ENCODE measurements at regions of chr3 and their contacts with region 1.

Region 1: DNA sequence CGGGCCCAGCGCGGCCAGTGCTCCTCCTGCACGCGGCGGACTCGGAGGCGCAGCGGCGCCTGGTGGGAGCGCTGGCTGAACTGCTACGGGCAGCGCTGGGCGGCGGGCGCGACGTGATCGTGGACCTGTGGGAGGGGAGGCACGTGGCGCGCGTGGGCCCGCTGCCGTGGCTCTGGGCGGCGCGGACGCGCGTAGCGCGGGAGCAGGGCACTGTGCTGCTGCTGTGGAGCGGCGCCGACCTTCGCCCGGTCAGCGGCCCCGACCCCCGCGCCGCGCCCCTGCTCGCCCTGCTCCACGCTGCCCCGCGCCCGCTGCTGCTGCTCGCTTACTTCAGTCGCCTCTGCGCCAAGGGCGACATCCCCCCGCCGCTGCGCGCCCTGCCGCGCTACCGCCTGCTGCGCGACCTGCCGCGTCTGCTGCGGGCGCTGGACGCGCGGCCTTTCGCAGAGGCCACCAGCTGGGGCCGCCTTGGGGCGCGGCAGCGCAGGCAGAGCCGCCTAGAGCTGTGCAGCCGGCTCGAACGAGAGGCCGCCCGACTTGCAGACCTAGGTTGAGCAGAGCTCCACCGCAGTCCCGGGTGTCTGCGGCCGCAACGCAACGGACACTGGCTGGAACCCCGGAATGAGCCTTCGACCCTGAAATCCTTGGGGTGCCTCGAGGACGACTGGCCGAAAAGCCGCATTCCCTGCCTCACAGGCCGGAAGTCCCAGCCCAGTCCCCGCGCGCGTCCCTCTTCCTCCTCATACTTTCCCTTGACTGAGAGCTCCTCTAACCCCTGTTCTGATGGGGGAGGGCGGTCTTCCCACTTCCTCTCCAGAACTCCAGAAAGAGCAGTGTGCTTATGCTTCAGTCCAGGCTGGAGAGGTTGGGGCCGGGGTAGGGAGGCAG is 1.4 kb upstream of the IL17RC start:
- DNase-seq: peak; percentile 91
- H3K4me3 ChIP-seq: peak overlapping the region; percentile 47 to 83 (median 68)
- H3K27ac ChIP-seq: peak overlapping the region; percentile 83 to 98 (median 96)
- H3K4me1 ChIP-seq: peaks cover 0 to 56% (median 47%) of the 10 kb centered on the region in 4 donors
- H3K27me3 ChIP-seq: no peaks in the 10 kb centered on the region
- CTCF ChIP-seq: peak in 3 of 4 experiments; percentile 47 to 61 (median 52)
- EP300 ChIP-seq: no peak
- POLR2A ChIP-seq: peak; percentile 18 to 41

Region 2: DNA sequence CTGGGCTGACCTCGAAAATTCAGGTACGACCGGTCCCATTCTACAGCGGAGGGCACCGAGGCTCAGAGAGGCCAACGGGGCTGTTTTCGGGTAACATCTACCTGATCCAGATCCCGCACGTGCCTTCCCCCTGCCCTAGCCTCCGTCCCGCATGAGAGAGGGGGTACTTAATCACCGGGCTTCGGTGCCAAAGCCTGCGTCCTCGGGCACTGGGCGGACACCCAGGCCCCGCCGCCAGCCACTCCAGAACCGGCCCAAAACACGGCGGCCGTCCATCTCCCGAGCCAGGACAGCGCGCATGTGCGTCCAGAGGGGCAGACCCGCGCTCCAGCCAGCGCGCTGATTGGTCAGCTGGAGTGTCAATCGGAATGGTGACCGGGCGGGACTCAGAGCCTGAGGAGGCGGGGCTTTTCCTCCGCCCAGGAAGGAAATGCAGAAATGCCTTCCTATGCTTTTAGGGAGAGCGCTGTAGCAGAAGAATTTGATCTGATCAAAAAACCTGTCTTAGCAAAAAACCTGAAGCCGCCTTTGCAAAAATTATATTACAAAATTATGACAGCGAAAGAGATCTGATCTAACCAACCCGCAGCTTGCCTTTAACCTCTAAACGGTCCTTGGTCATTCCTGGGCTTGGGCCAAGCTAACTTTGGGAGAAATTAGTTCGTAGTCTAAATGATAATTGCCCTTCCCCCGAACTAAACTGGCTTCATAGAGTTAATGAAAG is 71.6 kb before region 1 on chr3 and contains the start of gene RPUSD3:
- intact Hi-C with region 1: loop called (anchors 2 kb)
- DNase-seq: peak; percentile 99
- H3K4me3 ChIP-seq: peak within 1 kb of the TSS; percentile 56 to 84 (median 78)
- H3K27ac ChIP-seq: peak within 1 kb of the TSS; percentile 80 to 93 (median 89)
- H3K4me1 ChIP-seq: peaks cover 0 to 19% (median 12%) of the 10 kb centered on the region in 4 donors
- H3K27me3 ChIP-seq: no peaks in the 10 kb centered on the region
- CTCF ChIP-seq: no peak
- EP300 ChIP-seq: no peak
- POLR2A ChIP-seq: peak in 1 of 2 donors; percentile 50
- total RNA-seq, gene RPUSD3: 42.6 to 54.7 (median 47.6) TPM

Region 3: GRCh38 chr3:9862391-9863057 is 53.0 kb before region 1 on chr3:
- intact Hi-C with region 1: loop called (anchors 2 kb)
- DNase-seq: peak; percentile 89
- H3K4me3 ChIP-seq: peak overlapping the region; percentile 10 to 39 (median 23)
- H3K27ac ChIP-seq: peak overlapping the region; percentile 82 to 93 (median 90)
- H3K4me1 ChIP-seq: peaks cover 0 to 53% (median 50%) of the 10 kb centered on the region in 4 donors
- H3K27me3 ChIP-seq: no peaks in the 10 kb centered on the region
- CTCF ChIP-seq: peak in 2 of 4 experiments; percentile 19 to 55
- EP300 ChIP-seq: peak in 1 of 4 donors; percentile 17
- POLR2A ChIP-seq: no peak

Region 4: GRCh38 chr3:9890249-9891071 is 25.0 kb before region 1 on chr3 and contains the start of gene JAGN1:
- intact Hi-C with region 1: loop called (anchors 2 kb)
- DNase-seq: peak; percentile 95
- H3K4me3 ChIP-seq: peak within 1 kb of the TSS; percentile 65 to 99 (median 98)
- H3K27ac ChIP-seq: peak within 1 kb of the TSS; percentile 90 to 100 (median 98)
- H3K4me1 ChIP-seq: peaks cover 0 to 36% (median 26%) of the 10 kb centered on the region in 4 donors
- H3K27me3 ChIP-seq: no peaks in the 10 kb centered on the region
- CTCF ChIP-seq: peak in 1 of 4 experiments; percentile 15
- EP300 ChIP-seq: no peak
- POLR2A ChIP-seq: peak; percentile 93 to 95
- total RNA-seq, gene JAGN1: 33.7 to 55.1 (median 45.9) TPM

Measured in sigmoid colon (tissue), 7 donors.